Endothelial cell of umbilical vein (primary cell): ENCODE measurements at regions of chr2 and their contacts with region 1.

Region 1: DNA sequence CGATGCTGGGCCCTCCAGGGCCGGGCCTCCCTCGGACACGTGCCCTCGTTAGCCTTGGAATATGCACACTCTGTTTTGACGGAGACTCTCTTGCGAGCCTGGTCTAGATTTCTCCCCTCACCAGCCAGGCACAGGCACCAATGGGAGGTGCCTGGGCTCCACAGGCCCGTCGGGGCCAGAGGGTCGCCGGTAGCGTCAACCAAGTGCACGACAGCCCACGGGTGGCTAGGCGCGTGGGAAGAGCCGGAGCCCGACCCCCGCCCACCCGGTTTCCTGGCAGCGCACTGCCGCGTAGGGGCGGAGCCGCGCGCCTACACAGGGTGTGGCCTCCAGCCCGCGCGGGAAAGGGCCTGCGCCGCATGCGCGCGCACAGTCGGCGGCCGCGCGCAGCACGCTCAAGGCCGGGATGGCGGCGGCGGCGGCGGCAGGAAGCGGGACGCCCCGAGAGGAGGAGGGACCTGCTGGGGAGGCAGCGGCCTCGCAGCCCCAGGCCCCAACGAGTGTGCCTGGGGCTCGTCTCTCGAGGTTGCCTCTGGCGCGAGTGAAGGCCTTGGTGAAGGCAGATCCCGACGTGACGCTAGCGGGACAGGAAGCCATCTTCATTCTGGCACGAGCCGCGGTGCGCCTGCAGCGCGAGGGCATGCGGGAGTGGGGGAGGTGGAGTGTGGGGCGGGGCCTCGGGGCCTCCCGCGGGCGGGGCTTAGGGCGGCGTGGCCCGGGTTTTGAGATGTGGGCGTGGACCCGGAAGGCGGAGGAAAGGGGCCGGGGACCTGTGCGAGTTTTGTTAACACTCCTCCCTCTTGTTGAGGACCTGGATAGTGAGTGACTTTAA is at the start of gene POLE4:
- DNase-seq: peak; percentile 92
- H3K4me3 ChIP-seq: peak within 1 kb of the TSS; percentile 26 to 69 (median 56)
- H3K27ac ChIP-seq: peak within 1 kb of the TSS; percentile 54
- H3K4me1 ChIP-seq: peaks cover 3% of the 10 kb centered on the region
- H3K27me3 ChIP-seq: no peaks in the 10 kb centered on the region
- CTCF ChIP-seq: no peak
- POLR2A ChIP-seq: peak; percentile 85
- total RNA-seq, gene POLE4: 42.6 and 45.4 TPM in 2 replicates

Region 2: DNA sequence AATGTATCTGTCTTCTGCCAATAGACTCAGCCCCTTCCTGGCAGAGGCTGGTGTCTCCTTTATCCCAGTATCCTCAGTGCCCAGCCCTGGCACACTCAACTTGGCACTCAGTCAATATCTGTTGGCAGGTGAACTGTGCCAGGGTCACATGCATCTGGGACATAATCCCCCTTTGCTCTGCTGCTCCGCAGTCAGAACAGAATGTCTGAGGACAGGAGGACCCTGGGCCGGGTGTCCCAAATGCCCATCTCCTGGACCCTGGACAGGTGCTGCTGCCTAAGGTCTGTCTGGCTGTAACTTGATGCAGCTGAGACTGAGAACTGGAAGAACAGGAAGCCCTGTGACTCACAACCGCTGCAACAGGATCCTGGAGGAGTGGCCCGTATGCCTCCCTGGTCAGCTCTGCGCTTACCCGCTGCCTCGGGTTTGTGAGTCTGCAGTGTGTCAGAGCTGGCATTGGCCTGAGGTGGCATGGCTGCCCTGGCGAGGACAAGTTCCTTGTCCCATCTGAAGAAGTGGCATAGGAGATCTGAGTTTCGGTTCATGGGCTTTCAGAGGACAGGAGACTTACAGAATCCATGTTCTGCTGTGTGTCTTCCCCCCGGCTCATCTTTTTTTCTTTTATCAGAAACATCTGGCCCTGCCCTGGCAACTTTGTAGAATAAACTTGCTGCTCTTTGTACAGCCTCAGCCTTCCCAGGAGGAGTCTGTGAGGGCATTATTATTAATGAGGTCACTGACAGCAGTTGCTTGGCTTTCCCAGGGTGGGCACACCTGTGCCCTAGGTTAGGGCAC is 113.1 kb before region 1 on chr2:
- CTCF ChIA-PET with region 1: interaction called, 3 read pairs
- POLR2A ChIA-PET with region 1: no interaction called
- dilution Hi-C with region 1: no loop called
- intact Hi-C with region 1: loop called (anchors 5 kb)
- DNase-seq: peak; percentile 94
- H3K4me3 ChIP-seq: no peak overlapping the region
- H3K27ac ChIP-seq: peak overlapping the region; percentile 63
- H3K4me1 ChIP-seq: peaks cover 47% of the 10 kb centered on the region
- H3K27me3 ChIP-seq: no peaks in the 10 kb centered on the region
- CTCF ChIP-seq: no peak
- POLR2A ChIP-seq: peak; percentile 73

Region 3: GRCh38 chr2:74893332-74893731 is 65.2 kb before region 1 on chr2:
- CTCF ChIA-PET with region 1: no interaction called
- POLR2A ChIA-PET with region 1: no interaction called
- dilution Hi-C with region 1: no loop called
- intact Hi-C with region 1: loop called (anchors 1 kb)
- DNase-seq: peak; percentile 82
- H3K4me3 ChIP-seq: peak overlapping the region in 1 of 3 experiments; percentile 8
- H3K27ac ChIP-seq: peak overlapping the region; percentile 85
- H3K4me1 ChIP-seq: peaks cover 22% of the 10 kb centered on the region
- H3K27me3 ChIP-seq: no peaks in the 10 kb centered on the region
- CTCF ChIP-seq: no peak
- POLR2A ChIP-seq: peak; percentile 36

Region 4: GRCh38 chr2:74944987-74945787 is 13.3 kb before region 1 on chr2:
- CTCF ChIA-PET with region 1: no interaction called
- POLR2A ChIA-PET with region 1: no interaction called
- dilution Hi-C with region 1: no loop called
- intact Hi-C with region 1: no loop called
- DNase-seq: no peak
- H3K4me3 ChIP-seq: no peak overlapping the region
- H3K27ac ChIP-seq: no peak overlapping the region
- H3K4me1 ChIP-seq: no peaks in the 10 kb centered on the region
- H3K27me3 ChIP-seq: no peaks in the 10 kb centered on the region
- CTCF ChIP-seq: no peak
- POLR2A ChIP-seq: no peak

Region 5: DNA sequence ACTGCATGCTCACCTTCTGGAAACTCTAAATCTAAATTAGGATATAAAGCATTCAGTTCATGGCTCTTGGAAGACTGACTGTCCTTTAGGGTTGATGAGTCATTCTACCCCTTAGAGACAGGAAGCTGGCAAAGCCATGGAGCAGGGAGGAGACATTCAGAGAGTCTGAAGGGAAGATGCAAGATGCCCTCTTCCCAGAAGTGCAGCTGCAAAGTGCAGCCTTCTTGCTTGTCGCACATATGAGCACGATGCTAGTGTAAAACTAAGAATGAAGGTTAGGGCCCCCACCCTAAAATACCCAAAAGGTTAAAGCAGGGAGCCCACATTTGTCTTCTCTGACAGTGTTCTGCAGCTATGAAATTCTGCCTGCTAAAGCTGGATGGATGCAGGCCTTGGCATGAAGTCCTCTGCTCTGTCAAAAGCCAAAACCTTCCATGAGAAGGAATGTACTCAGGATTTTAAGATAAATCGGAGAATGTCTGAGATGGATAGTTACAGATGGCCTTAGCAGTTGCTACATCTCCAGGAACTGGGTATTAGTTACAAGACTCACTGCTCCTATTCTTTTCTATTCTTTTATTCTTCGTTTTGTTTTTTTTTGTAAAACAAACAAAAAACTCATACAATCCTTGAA is 89.6 kb after region 1 on chr2:
- CTCF ChIA-PET with region 1: no interaction called
- POLR2A ChIA-PET with region 1: no interaction called
- dilution Hi-C with region 1: no loop called
- intact Hi-C with region 1: no loop called
- DNase-seq: no peak
- H3K4me3 ChIP-seq: no peak overlapping the region
- H3K27ac ChIP-seq: no peak overlapping the region
- H3K4me1 ChIP-seq: peaks cover 2% of the 10 kb centered on the region
- H3K27me3 ChIP-seq: peaks cover 0 to 1% of the 10 kb centered on the region in 2 experiments
- CTCF ChIP-seq: no peak
- POLR2A ChIP-seq: no peak